ENCODE measurements at regions of chr7 and their contacts with region 1.

Region 1: DNA sequence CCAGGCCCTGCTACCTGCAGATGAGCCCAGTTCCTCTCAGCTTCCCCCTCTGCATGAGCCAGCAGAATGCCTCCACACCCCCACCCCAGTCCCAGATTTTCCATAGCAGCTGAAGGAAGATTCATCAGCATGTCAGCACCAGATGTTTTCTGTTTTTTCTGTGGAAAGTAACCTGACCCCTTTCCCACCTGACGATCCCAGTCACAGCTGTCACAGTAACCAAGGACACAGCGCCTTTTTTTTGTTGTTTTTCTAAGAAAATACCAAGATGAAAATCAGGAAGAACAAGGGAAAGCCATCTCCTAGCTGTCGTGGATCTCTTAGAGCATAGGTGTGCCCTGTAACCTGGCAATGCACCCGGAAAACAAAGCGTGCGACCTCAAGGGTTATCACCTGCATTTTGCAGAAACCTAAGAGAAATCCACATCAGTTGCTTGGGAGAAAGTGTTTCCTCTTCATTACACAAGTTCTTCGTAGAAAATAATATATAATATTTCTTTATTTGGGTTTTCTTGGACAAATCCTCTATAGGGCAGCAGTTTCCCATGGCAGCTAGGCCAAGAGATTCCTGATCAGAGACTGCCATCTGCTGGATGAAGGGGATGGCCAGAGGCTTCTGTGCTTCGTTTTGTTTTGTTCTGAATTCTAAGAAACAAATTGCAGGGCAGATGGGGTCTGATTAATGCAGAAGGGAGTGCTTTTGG is 401.9 kb downstream of the TNS3 start:
- DNase-seq: peak in 1 of 2 donors; percentile 39
- ATAC-seq: peak; percentile 55 to 56
- H3K4me3 ChIP-seq: no peak overlapping the region
- H3K27ac ChIP-seq: no peak overlapping the region
- H3K4me1 ChIP-seq: peaks cover 26 to 44% of the 10 kb centered on the region in 2 donors
- H3K27me3 ChIP-seq: no peaks in the 10 kb centered on the region
- CTCF ChIP-seq: peak; percentile 69 to 89 (median 76)
- POLR2A ChIP-seq: no peak

Region 2: GRCh38 chr7:45917658-45918057 is 1262.3 kb before region 1 on chr7:
- in situ Hi-C with region 1: loop called (anchors 5 to 10 kb)
- intact Hi-C with region 1: loop called (anchors 2 kb)
- DNase-seq: peak; percentile 46 to 54
- ATAC-seq: peak; percentile 56 to 73
- H3K4me3 ChIP-seq: peak overlapping the region; percentile 27 to 55 (median 50)
- H3K27ac ChIP-seq: no peak overlapping the region
- H3K4me1 ChIP-seq: peaks cover 7 to 26% of the 10 kb centered on the region in 2 donors
- H3K27me3 ChIP-seq: peaks cover 36 to 42% (median 41%) of the 10 kb centered on the region in 3 donors
- CTCF ChIP-seq: peak; percentile 75 to 95 (median 85)
- POLR2A ChIP-seq: no peak

Region 3: DNA sequence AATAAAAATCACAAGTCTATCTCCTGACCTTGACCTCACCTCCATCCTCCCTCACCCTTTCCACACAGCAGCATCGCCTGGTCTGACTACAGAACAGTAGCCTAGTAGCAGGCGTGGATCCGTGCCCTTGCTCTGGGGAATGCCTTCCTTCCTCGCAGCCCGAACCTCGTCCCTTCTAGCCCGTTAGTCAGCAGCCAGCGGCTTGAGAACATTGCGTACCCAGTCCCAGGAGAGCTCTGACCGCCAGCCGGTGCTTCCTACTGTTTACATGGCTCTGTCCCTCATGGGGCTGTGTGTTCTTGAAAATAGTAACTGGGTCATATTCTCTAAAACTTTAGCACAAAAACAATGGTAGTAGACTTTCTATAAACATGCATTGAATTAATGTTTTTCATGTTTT is 576.2 kb before region 1 on chr7:
- in situ Hi-C with region 1: no loop called
- intact Hi-C with region 1: loop called (anchors 10 kb)
- DNase-seq: peak; percentile 93
- ATAC-seq: peak; percentile 86 to 89
- H3K4me3 ChIP-seq: no peak overlapping the region
- H3K27ac ChIP-seq: peak overlapping the region; percentile 72 to 90 (median 77)
- H3K4me1 ChIP-seq: peaks cover 23 to 32% of the 10 kb centered on the region in 2 donors
- H3K27me3 ChIP-seq: no peaks in the 10 kb centered on the region
- CTCF ChIP-seq: no peak
- POLR2A ChIP-seq: no peak

Region 4: DNA sequence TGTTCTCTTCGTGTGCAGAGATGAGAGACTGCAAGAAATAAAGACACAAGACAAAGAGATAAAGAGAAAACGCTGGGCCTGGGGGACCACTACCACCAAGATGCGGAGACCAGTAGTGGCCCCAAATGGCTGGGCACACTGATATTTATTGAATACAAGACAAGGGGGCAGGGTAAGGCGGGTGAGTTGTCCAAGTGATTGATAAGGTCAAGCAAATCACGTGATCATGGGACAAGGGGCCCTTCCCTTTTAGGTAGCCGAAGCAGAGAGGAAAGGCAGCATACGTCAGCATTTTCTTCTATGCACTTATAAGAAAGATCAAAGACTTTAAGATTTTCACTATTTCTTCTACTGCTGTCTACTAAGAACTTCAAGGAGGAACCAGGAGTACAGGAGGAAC is 360.1 kb before region 1 on chr7:
- in situ Hi-C with region 1: no loop called
- intact Hi-C with region 1: no loop called
- DNase-seq: no peak
- ATAC-seq: no peak
- H3K4me3 ChIP-seq: no peak overlapping the region
- H3K27ac ChIP-seq: no peak overlapping the region
- H3K4me1 ChIP-seq: no peaks in the 10 kb centered on the region
- H3K27me3 ChIP-seq: no peaks in the 10 kb centered on the region
- CTCF ChIP-seq: no peak
- POLR2A ChIP-seq: no peak

Region 5: DNA sequence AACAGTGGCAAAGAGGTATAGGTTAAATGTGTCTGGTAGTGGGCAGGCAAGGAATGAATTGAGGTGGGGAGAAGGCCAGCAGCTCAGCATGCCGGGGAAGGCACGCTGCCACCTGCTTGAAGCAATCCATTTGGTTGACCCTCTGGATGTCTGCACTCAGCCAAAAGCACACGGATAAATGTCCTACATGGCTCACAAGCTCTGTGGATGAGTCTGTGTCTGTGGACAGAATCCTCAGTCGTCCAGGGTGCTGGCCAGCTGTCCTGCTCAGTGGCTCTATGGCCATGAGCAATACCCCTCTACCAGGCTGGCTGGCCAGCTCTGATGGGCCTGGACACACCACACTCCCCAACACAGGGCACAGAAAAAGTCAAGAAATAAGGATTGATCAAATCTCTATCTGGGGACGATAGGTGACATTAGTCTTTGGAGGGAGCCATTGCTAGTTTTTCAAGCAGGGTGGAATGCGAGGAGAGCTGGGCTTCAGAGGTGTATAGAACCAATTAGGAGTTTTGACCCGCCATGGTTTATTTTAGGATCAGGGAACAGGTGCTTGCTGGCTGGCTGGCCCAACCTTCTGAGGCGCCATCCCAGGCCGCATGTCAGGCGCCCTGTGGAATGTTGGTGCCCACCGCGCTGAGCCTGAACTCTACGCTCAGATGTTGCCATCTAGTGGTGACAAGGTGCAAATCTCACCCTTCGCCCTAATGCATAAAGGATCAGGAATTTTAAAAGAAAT is 91.5 kb before region 1 on chr7:
- in situ Hi-C with region 1: no loop called
- intact Hi-C with region 1: loop called (anchors 5 kb)
- DNase-seq: peak; percentile 23 to 67
- ATAC-seq: peak; percentile 84
- H3K4me3 ChIP-seq: no peak overlapping the region
- H3K27ac ChIP-seq: peak overlapping the region; percentile 26 to 66 (median 47)
- H3K4me1 ChIP-seq: peaks cover 10 to 13% of the 10 kb centered on the region in 2 donors
- H3K27me3 ChIP-seq: no peaks in the 10 kb centered on the region
- CTCF ChIP-seq: peak; percentile 78 to 90 (median 84)
- POLR2A ChIP-seq: no peak

Region 6: DNA sequence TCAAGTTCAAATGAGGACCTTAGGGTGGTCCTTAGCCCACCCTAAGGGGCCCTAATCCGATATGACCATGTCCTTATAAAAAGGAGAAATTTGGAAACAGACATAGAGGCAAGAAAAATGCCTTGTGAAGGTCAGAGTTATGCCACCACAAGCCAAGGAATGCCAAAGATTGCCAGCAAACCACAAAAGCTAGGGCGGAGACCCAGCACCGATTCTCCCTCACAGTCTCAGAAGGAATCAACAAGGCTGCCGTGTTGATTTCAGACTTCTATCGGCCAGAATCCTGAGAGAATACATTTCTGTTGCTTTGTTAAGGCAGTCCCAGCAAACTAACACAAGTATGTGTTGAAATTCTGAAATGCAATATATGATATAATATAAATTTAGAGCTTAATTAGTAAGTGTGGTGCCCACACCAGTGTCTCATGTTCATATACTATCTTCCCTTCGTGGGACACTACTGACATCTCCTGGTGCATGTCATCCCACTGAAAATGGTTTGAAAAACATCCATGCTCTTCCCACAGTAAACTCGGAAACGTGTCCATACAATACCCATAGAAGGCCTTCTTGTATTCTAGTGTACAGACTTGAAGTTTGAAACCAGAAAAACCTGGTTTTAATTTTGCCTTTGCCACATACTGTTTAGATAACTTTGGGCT is 52.9 kb after region 1 on chr7:
- in situ Hi-C with region 1: loop called in 1 of 4 experiments (anchors 10 kb)
- intact Hi-C with region 1: no loop called
- DNase-seq: no peak
- ATAC-seq: no peak
- H3K4me3 ChIP-seq: no peak overlapping the region
- H3K27ac ChIP-seq: no peak overlapping the region
- H3K4me1 ChIP-seq: peaks cover 0 to 21% of the 10 kb centered on the region in 2 donors
- H3K27me3 ChIP-seq: no peaks in the 10 kb centered on the region
- CTCF ChIP-seq: peak in 1 of 5 experiments; percentile 26
- POLR2A ChIP-seq: no peak

Region 7: DNA sequence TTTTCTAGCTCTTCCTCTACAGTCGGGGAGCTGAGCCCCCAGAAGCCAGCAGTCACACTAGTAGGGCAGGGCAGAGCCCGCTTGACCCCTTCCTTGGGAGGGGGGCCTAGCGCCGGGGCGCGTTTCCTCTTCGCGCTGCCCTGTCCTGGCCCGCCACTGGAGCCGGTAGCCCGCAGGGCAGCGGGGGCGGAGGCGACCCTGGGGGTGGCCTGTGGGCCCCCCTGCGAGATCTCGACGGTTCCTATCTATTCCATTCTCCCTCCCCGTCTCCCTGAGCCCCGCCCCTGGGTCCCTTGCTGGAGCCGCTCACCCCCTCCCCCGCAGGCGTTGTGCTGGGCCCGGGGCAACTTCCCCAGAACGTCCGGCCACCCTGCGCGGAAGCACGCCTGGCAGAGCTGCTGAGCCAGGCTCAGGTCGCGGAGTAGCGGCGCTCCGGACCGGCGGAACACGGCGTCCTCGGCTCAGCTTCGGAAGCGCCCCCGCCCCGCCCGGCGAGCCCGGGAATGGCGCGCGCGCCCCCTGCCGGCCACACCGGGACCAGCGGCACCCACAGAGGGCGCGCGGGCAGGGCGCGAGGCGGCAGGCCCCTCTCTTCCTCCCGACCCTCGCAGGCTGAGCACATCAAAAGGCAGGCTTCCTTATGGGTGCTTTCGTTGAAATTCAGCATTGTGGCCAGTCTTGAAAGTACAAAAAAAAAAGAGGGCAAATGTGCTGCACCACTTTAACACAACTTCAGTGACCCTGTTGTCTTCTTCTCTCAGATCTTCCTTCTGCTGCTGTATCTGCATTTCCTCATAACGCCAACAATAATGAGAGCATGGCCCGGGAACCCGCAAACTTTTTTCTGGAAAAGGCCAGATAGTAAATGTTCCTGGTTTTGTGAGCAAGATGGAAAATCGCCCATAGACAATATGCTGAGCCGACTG is 74.4 kb after region 1 on chr7:
- in situ Hi-C with region 1: loop called in 1 of 4 experiments (anchors 5 kb)
- intact Hi-C with region 1: loop called (anchors 1 kb)
- DNase-seq: peak; percentile 85
- ATAC-seq: peak; percentile 81 to 83
- H3K4me3 ChIP-seq: peak overlapping the region; percentile 60 to 70 (median 68)
- H3K27ac ChIP-seq: peak overlapping the region; percentile 90 to 96 (median 94)
- H3K4me1 ChIP-seq: peaks cover 16 to 20% of the 10 kb centered on the region in 2 donors
- H3K27me3 ChIP-seq: no peaks in the 10 kb centered on the region
- CTCF ChIP-seq: peak; percentile 79 to 100 (median 97)
- POLR2A ChIP-seq: peak in 1 of 2 donors; percentile 39

Region 8: GRCh38 chr7:47351233-47352154 is 171.5 kb after region 1 on chr7:
- in situ Hi-C with region 1: no loop called
- intact Hi-C with region 1: no loop called
- DNase-seq: no peak
- ATAC-seq: no peak
- H3K4me3 ChIP-seq: no peak overlapping the region
- H3K27ac ChIP-seq: no peak overlapping the region
- H3K4me1 ChIP-seq: peaks cover 0 to 4% of the 10 kb centered on the region in 2 donors
- H3K27me3 ChIP-seq: no peaks in the 10 kb centered on the region
- CTCF ChIP-seq: no peak
- POLR2A ChIP-seq: no peak

Region 9: DNA sequence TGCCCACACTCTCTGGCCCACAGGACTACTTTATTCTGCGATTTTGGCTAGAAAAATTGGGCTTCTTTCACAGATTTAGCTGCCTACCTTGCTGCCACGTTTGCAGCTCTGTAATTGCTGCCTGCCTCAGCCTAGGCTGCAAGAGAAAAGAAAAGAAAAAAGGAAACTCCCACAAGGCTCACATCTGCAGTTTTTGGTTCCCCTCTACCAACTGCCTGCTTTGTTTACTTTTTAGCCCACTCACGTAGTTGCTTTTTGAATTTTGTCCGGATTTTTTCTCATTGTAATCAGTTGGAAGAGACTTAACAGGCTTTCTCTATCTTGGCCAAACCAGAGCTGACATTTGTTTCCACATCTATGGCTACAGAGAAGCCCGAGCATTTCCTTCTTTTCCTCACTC is 824.7 kb after region 1 on chr7:
- in situ Hi-C with region 1: no loop called
- intact Hi-C with region 1: no loop called
- DNase-seq: no peak
- ATAC-seq: no peak
- H3K4me3 ChIP-seq: no peak overlapping the region
- H3K27ac ChIP-seq: no peak overlapping the region
- H3K4me1 ChIP-seq: no peaks in the 10 kb centered on the region
- H3K27me3 ChIP-seq: no peaks in the 10 kb centered on the region
- CTCF ChIP-seq: no peak
- POLR2A ChIP-seq: no peak